Naive thymus-derived CD4-positive, alpha-beta T cell (primary cell): ENCODE measurements at regions of chrX and their contacts with region 1.

Region 1: GRCh38 chrX:65595460-65595876 is 60.9 kb upstream of the LAS1L start:
- DNase-seq: peak; percentile 67 to 94 (median 87)
- ATAC-seq: peak; percentile 97
- H3K4me3 ChIP-seq: peak overlapping the region; percentile 41
- H3K4me3 Mint-ChIP-seq: peak overlapping the region in 9 of 10 donors; percentile 58 to 79 (median 76)
- H3K27ac ChIP-seq: peak overlapping the region; percentile 74
- H3K27ac Mint-ChIP-seq: peak overlapping the region; percentile 89 to 100 (median 96)
- H3K4me1 ChIP-seq: peaks cover 38 to 41% of the 10 kb centered on the region in 2 donors
- H3K4me1 Mint-ChIP-seq: peaks cover 27 to 59% (median 50%) of the 10 kb centered on the region in 7 donors
- H3K27me3 ChIP-seq: no peaks in the 10 kb centered on the region
- H3K27me3 Mint-ChIP-seq: no peaks in the 10 kb centered on the region

Region 2: GRCh38 chrX:65136424-65136823 is 459.0 kb before region 1 on chrX:
- CTCF ChIA-PET with region 1: no interaction called
- POLR2A ChIA-PET with region 1: no interaction called
- intact Hi-C with region 1: no loop called
- DNase-seq: no peak
- ATAC-seq: no peak
- H3K4me3 ChIP-seq: no peak overlapping the region
- H3K4me3 Mint-ChIP-seq: no peak overlapping the region
- H3K27ac ChIP-seq: no peak overlapping the region
- H3K27ac Mint-ChIP-seq: peak overlapping the region in 1 of 9 donors; percentile 24
- H3K4me1 ChIP-seq: no peaks in the 10 kb centered on the region
- H3K4me1 Mint-ChIP-seq: peaks cover 0 to 7% (median 3%) of the 10 kb centered on the region in 7 donors
- H3K27me3 ChIP-seq: no peaks in the 10 kb centered on the region
- H3K27me3 Mint-ChIP-seq: no peaks in the 10 kb centered on the region

Region 3: GRCh38 chrX:65407157-65407626 is 188.3 kb before region 1 on chrX:
- CTCF ChIA-PET with region 1: no interaction called
- POLR2A ChIA-PET with region 1: no interaction called
- intact Hi-C with region 1: no loop called
- DNase-seq: peak in 3 of 9 donors; percentile 1 to 6 (median 5)
- ATAC-seq: no peak
- H3K4me3 ChIP-seq: no peak overlapping the region
- H3K4me3 Mint-ChIP-seq: peak overlapping the region; percentile 41 to 85 (median 69)
- H3K27ac ChIP-seq: no peak overlapping the region
- H3K27ac Mint-ChIP-seq: no peak overlapping the region
- H3K4me1 ChIP-seq: no peaks in the 10 kb centered on the region
- H3K4me1 Mint-ChIP-seq: peaks cover 0 to 10% (median 8%) of the 10 kb centered on the region in 7 donors
- H3K27me3 ChIP-seq: no peaks in the 10 kb centered on the region
- H3K27me3 Mint-ChIP-seq: peaks cover 34 to 38% (median 36%) of the 10 kb centered on the region in 5 donors

Region 4: DNA sequence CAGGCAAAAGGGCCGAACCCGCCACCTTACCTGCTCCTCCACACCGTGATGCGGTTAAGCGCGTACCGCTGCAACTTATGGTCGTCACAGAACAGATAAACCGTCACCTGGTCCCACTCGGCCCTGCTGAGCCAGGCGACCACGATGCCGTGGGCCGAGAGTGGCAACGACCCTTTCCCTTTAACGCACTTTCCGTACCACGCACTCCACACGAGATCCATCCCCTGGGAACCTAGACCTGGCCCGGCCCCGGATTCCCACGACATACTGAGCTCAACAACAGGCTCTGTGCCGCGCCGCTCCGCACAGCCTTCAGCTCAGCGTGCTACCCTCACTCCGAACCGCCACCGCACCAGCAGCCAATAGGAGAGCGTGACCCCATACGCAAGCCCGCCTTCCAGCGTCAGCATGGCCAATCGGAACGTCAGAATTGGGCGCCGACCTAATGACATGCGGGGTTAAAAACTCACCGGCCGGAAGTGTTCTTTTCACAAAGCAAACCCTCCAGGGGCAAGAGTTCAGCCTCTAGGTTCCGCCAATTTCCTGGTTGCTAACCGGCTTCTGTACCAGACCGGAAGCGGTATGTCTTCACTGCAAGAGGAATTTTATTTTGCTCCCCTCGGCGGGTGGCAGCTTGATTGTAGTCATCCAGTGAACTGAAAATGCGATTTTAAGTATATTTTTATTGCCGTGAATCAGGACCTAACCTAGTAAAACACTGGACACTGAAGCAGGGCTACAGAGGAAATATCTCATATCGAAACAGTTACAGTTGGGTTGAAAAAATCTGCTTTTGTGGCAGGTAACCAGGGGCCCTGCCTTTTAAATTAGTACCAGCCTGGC is 60.8 kb before region 1 on chrX and contains the start of gene LAS1L:
- CTCF ChIA-PET with region 1: no interaction called
- POLR2A ChIA-PET with region 1: interaction called, 3 read pairs
- intact Hi-C with region 1: loop called in 1 of 2 experiments (anchors 2 kb)
- DNase-seq: peak; percentile 71 to 94 (median 90)
- ATAC-seq: peak; percentile 99
- H3K4me3 ChIP-seq: peak within 1 kb of the TSS; percentile 96
- H3K4me3 Mint-ChIP-seq: peak within 1 kb of the TSS; percentile 97 to 100 (median 100)
- H3K27ac ChIP-seq: peak within 1 kb of the TSS; percentile 75
- H3K27ac Mint-ChIP-seq: peak within 1 kb of the TSS; percentile 94 to 100 (median 98)
- H3K4me1 ChIP-seq: peaks cover 10 to 13% of the 10 kb centered on the region in 2 donors
- H3K4me1 Mint-ChIP-seq: peaks cover 5 to 28% (median 16%) of the 10 kb centered on the region in 7 donors
- H3K27me3 ChIP-seq: no peaks in the 10 kb centered on the region
- H3K27me3 Mint-ChIP-seq: no peaks in the 10 kb centered on the region
- total RNA-seq, gene LAS1L: 37.2 to 48.9 (median 44.9) TPM

Region 5: DNA sequence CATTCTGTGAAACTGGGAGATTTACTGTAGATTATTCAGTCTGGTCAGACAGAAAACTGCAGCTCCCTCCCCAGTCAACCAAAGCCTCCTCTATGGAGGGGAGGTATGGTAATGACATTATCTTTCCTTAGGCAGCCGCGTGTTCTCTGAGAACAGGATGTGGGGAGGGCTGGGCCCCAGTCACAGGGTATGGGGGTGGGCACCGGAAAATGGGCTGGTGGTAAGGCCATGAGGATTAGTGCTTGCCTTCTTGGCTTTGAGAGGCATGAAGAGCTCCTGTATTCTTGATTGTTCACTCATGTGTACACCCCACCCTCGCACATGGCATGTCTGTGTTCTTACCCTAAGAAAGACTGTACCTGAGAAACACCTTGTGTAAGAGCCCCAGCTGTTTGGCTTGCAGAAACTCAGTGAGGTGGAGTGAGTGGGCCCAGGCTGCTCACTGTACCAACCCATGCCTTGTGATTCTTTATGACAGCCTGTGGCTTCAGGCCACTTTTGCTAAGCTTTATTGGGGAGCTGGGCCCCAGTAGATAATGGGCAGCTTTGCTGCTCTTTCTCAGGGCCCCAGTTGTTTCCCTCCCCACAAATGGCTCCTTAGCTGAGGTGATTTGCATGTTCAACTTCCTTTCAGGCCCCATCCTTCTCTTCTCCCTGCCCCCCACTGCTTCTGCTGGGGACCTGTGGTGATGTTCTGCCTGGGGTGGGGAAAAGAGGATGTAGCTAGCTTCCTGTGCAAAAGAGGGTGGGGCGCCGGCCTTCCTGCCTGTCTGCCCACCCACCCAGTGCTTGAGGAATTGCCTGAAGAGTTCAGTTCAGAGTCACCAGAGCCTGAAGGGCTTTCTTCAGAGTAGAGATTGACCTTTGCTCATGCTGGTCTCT is 102.7 kb after region 1 on chrX:
- CTCF ChIA-PET with region 1: interaction called, 9 read pairs
- POLR2A ChIA-PET with region 1: interaction called, 11 read pairs
- intact Hi-C with region 1: loop called (anchors 1 kb)
- DNase-seq: peak; percentile 8 to 81 (median 78)
- ATAC-seq: peak; percentile 84
- H3K4me3 ChIP-seq: peak overlapping the region; percentile 36
- H3K4me3 Mint-ChIP-seq: peak overlapping the region; percentile 73 to 93 (median 86)
- H3K27ac ChIP-seq: peak overlapping the region; percentile 68
- H3K27ac Mint-ChIP-seq: peak overlapping the region; percentile 91 to 98 (median 93)
- H3K4me1 ChIP-seq: peaks cover 70 to 77% of the 10 kb centered on the region in 2 donors
- H3K4me1 Mint-ChIP-seq: peaks cover 34 to 100% (median 85%) of the 10 kb centered on the region in 7 donors
- H3K27me3 ChIP-seq: no peaks in the 10 kb centered on the region
- H3K27me3 Mint-ChIP-seq: no peaks in the 10 kb centered on the region

Region 6: GRCh38 chrX:65750674-65751469 is 155.4 kb after region 1 on chrX:
- CTCF ChIA-PET with region 1: interaction called, 3 read pairs
- POLR2A ChIA-PET with region 1: no interaction called
- intact Hi-C with region 1: loop called in 1 of 2 experiments (anchors 5 kb)
- DNase-seq: peak in 7 of 9 donors; percentile 14 to 49 (median 34)
- ATAC-seq: peak; percentile 77
- H3K4me3 ChIP-seq: no peak overlapping the region
- H3K4me3 Mint-ChIP-seq: peak overlapping the region; percentile 55 to 81 (median 74)
- H3K27ac ChIP-seq: no peak overlapping the region
- H3K27ac Mint-ChIP-seq: peak overlapping the region; percentile 57 to 85 (median 76)
- H3K4me1 ChIP-seq: peaks cover 15 to 21% of the 10 kb centered on the region in 2 donors
- H3K4me1 Mint-ChIP-seq: peaks cover 30 to 80% (median 63%) of the 10 kb centered on the region in 7 donors
- H3K27me3 ChIP-seq: no peaks in the 10 kb centered on the region
- H3K27me3 Mint-ChIP-seq: no peaks in the 10 kb centered on the region

Region 7: DNA sequence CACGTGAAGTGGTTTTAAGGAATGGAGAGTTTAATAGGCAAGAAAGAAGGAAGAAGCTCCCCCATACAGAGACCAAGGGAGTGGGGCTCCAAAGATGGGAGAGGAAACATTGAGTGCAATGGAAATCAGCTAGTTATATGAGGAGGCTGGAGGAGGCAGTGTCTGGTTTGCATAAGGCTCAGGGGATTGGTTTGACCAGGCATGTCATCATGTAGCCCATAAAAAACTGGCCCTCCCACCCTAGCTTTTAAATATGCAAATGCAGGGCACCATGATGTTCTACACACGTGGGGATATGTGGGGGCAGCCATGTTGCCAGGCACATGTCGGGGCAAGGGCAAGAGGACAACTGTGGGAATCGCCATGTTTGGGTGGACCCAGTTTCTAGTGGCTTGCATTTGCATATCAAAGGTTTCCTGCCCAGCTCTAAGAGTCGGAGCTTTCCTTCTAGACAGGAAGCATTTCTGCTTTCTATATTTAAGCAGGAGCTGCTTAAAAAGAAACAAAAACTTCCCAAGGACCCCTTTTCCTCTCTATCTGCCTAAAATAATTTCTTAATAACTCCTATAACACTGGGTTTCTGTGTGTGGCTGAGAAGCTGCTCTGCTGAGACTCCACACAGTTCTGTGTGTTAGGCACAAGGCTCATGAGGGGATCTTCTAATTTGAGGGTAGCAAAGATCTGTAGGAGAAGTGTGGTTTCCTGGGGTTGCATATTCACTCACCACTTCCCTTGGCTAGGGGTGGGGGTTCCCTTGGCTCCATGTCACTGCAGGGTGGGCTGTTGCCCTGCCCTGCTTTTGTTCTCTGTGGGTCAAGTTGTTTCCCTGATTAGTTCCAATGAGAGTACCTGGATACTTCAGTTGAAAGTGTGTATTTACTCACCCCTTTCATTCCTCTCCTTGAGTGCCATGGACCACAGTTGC is 330.9 kb after region 1 on chrX:
- CTCF ChIA-PET with region 1: no interaction called
- POLR2A ChIA-PET with region 1: no interaction called
- intact Hi-C with region 1: loop called (anchors 2 to 5 kb)
- DNase-seq: peak in 7 of 9 donors; percentile 13 to 75 (median 54)
- ATAC-seq: peak; percentile 75
- H3K4me3 ChIP-seq: peak overlapping the region; percentile 31
- H3K4me3 Mint-ChIP-seq: peak overlapping the region; percentile 37 to 84 (median 70)
- H3K27ac ChIP-seq: peak overlapping the region; percentile 37
- H3K27ac Mint-ChIP-seq: peak overlapping the region; percentile 15 to 93 (median 73)
- H3K4me1 ChIP-seq: peaks cover 22 to 32% of the 10 kb centered on the region in 2 donors
- H3K4me1 Mint-ChIP-seq: peaks cover 33 to 71% (median 61%) of the 10 kb centered on the region in 7 donors
- H3K27me3 ChIP-seq: no peaks in the 10 kb centered on the region
- H3K27me3 Mint-ChIP-seq: no peaks in the 10 kb centered on the region

Region 8: GRCh38 chrX:66110112-66110511 is 514.6 kb after region 1 on chrX:
- CTCF ChIA-PET with region 1: no interaction called
- POLR2A ChIA-PET with region 1: no interaction called
- intact Hi-C with region 1: loop called in 1 of 2 experiments (anchors 5 kb)
- DNase-seq: peak in 6 of 9 donors; percentile 7 to 37 (median 21)
- ATAC-seq: peak; percentile 66
- H3K4me3 ChIP-seq: no peak overlapping the region
- H3K4me3 Mint-ChIP-seq: no peak overlapping the region
- H3K27ac ChIP-seq: no peak overlapping the region
- H3K27ac Mint-ChIP-seq: no peak overlapping the region
- H3K4me1 ChIP-seq: no peaks in the 10 kb centered on the region
- H3K4me1 Mint-ChIP-seq: peaks cover 0 to 18% (median 7%) of the 10 kb centered on the region in 7 donors
- H3K27me3 ChIP-seq: no peaks in the 10 kb centered on the region
- H3K27me3 Mint-ChIP-seq: no peaks in the 10 kb centered on the region